Activated T-helper 1 cell treated with anti-CD3 and anti-CD28 coated beads, Interleukin-12 subunit alpha, Interleukin-12 subunit beta, Interleukin-2, Interleukin-4 antibody, amounts not matched to agents 30 ng/mL and 10 ng/mL and 1 ng/mL, durations not matched to agents 14 hours and 24 hours and 36 hours (primary cell): ENCODE measurements at regions of chr2 and their contacts with region 1.

Region 1: GRCh38 chr2:216170076-216170763 is 61.1 kb downstream of the XRCC5 start:
- DNase-seq: no peak
- H3K4me3 Mint-ChIP-seq: no peak overlapping the region
- H3K27ac Mint-ChIP-seq: peak overlapping the region; percentile 2
- H3K4me1 Mint-ChIP-seq: peaks cover 31% of the 10 kb centered on the region
- H3K27me3 Mint-ChIP-seq: no peaks in the 10 kb centered on the region

Region 2: DNA sequence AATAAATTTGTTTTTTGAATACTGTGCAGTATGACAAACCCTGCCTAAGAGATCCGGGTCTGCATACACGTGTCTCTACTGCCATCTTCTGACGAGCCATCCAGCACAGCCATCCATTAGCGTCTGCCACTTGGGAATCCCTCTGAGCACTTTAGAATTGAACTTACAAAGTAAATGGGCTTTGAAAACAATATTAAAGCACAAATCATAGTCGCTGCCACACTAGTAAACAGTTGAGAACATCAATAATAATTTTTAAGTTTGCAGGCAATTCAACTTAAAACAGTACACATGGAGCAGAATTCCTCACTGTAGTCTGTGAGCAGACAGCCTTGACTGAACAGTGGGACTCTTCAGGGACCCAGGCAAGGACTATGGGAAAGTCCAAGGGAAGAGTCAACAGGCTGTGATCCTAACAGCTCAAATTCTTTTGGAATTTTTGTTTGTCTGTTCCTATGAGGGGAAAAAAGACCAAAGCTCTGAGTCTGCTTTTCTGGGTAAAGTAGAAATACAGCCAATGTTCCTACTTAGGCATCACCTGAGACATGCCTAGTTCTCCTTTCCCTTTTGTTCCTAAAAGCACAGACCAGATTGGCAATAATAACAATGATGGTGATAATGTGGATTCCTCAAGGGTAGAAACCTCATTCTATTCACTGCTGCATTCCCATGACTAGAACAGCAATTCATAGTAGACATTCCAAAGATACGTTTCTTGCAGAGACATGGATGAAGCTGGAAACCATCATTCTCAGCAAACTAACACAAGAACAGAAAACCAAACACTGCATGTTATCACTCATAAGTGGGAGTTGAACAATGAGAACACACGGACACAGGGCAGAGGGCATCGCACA is 249.7 kb before region 1 on chr2:
- intact Hi-C with region 1: no loop called
- DNase-seq: peak; percentile 19
- H3K4me3 Mint-ChIP-seq: no peak overlapping the region
- H3K27ac Mint-ChIP-seq: no peak overlapping the region
- H3K4me1 Mint-ChIP-seq: peaks cover 7% of the 10 kb centered on the region
- H3K27me3 Mint-ChIP-seq: peaks cover 7% of the 10 kb centered on the region

Region 3: GRCh38 chr2:216188956-216189355 is 18.7 kb after region 1 on chr2:
- intact Hi-C with region 1: loop called (anchors 2 kb)
- DNase-seq: no peak
- H3K4me3 Mint-ChIP-seq: no peak overlapping the region
- H3K27ac Mint-ChIP-seq: no peak overlapping the region
- H3K4me1 Mint-ChIP-seq: peaks cover 73% of the 10 kb centered on the region
- H3K27me3 Mint-ChIP-seq: no peaks in the 10 kb centered on the region

Region 4: DNA sequence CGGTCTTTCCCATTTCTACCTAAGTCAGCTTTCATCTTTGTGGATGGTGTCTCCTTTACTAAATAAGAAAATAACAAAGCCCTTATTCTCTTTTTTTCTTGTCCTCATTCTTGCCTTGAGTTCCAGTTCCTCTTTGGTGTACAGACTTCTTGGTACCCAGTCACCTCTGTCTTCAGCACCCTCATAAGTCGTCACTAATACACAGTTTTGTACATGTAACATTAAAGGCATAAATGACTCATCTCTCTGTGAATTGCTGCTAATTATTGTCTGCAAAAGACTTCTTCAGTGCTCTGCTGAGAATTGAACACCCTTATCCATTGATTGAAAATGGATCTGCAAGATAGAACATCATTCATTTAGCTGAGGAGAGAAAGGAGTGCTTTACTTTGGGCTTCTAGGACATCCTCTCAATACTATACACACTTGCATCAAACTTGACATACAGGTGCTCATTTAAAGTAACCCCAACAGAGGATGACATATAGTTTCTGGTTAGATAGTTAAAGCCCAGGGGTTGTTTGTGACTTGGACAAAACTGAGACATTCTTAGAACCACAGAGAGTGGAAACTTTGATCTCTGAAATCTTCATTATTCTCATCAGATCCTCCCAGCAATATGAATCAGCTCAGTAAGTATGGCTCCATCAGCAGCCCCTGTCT is 36.0 kb after region 1 on chr2:
- intact Hi-C with region 1: loop called (anchors 2 kb)
- DNase-seq: no peak
- H3K4me3 Mint-ChIP-seq: no peak overlapping the region
- H3K27ac Mint-ChIP-seq: peak overlapping the region; percentile 87
- H3K4me1 Mint-ChIP-seq: peaks cover 79% of the 10 kb centered on the region
- H3K27me3 Mint-ChIP-seq: no peaks in the 10 kb centered on the region